A673 (cell line): ENCODE measurements at regions of chr11 and their contacts with region 1.

Region 1: GRCh38 chr11:30749268-30749667 is 163.1 kb upstream of the MPPED2 start:
- DNase-seq: peak; percentile 100
- H3K4me3 ChIP-seq: no peak overlapping the region
- H3K27ac ChIP-seq: peak overlapping the region; percentile 73
- H3K4me1 ChIP-seq: peaks cover 50% of the 10 kb centered on the region
- H3K27me3 ChIP-seq: no peaks in the 10 kb centered on the region
- CTCF ChIP-seq: no peak

Region 2: GRCh38 chr11:30567120-30567519 is 182.1 kb before region 1 on chr11:
- CTCF ChIA-PET with region 1: no interaction called
- POLR2A ChIA-PET with region 1: no interaction called
- intact Hi-C with region 1: loop called (anchors 1 kb)
- DNase-seq: peak; percentile 90
- H3K4me3 ChIP-seq: no peak overlapping the region
- H3K27ac ChIP-seq: peak overlapping the region; percentile 58
- H3K4me1 ChIP-seq: peaks cover 52% of the 10 kb centered on the region
- H3K27me3 ChIP-seq: no peaks in the 10 kb centered on the region
- CTCF ChIP-seq: no peak

Region 3: GRCh38 chr11:30816959-30817880 is 68.0 kb after region 1 on chr11:
- CTCF ChIA-PET with region 1: no interaction called
- POLR2A ChIA-PET with region 1: no interaction called
- intact Hi-C with region 1: loop called (anchors 2 kb)
- DNase-seq: no peak
- H3K4me3 ChIP-seq: no peak overlapping the region
- H3K27ac ChIP-seq: no peak overlapping the region
- H3K4me1 ChIP-seq: peaks cover 32% of the 10 kb centered on the region
- H3K27me3 ChIP-seq: no peaks in the 10 kb centered on the region
- CTCF ChIP-seq: no peak

Region 4: GRCh38 chr11:30984442-30984816 is 235.2 kb after region 1 on chr11:
- CTCF ChIA-PET with region 1: no interaction called
- POLR2A ChIA-PET with region 1: no interaction called
- intact Hi-C with region 1: no loop called
- DNase-seq: no peak
- H3K4me3 ChIP-seq: no peak overlapping the region
- H3K27ac ChIP-seq: no peak overlapping the region
- H3K4me1 ChIP-seq: peaks cover 15% of the 10 kb centered on the region
- H3K27me3 ChIP-seq: peaks cover 20% of the 10 kb centered on the region
- CTCF ChIP-seq: no peak